Kidney (tissue), 22 donors: ENCODE measurements at regions of chr15 and their contacts with region 1.

Region 1: GRCh38 chr15:89874926-89875564 is 18.7 kb downstream of the AP3S2 start:
- DNase-seq: peak; percentile 77 to 90 (median 80)
- H3K4me3 ChIP-seq: no peak overlapping the region
- H3K27ac ChIP-seq: no peak overlapping the region
- H3K4me1 ChIP-seq: peaks cover 0 to 6% (median 0%) of the 10 kb centered on the region in 3 donors
- H3K27me3 ChIP-seq: no peaks in the 10 kb centered on the region
- CTCF ChIP-seq: peak; percentile 76

Region 2: GRCh38 chr15:89754361-89755140 is 120.5 kb before region 1 on chr15:
- intact Hi-C with region 1: loop called (anchors 5 kb)
- DNase-seq: no peak
- H3K4me3 ChIP-seq: no peak overlapping the region
- H3K27ac ChIP-seq: no peak overlapping the region
- H3K4me1 ChIP-seq: peaks cover 0 to 12% (median 0%) of the 10 kb centered on the region in 3 donors
- H3K27me3 ChIP-seq: no peaks in the 10 kb centered on the region
- CTCF ChIP-seq: no peak